GM12878 (cell line): ENCODE measurements at regions of chr10 and their contacts with region 1.

Region 1: DNA sequence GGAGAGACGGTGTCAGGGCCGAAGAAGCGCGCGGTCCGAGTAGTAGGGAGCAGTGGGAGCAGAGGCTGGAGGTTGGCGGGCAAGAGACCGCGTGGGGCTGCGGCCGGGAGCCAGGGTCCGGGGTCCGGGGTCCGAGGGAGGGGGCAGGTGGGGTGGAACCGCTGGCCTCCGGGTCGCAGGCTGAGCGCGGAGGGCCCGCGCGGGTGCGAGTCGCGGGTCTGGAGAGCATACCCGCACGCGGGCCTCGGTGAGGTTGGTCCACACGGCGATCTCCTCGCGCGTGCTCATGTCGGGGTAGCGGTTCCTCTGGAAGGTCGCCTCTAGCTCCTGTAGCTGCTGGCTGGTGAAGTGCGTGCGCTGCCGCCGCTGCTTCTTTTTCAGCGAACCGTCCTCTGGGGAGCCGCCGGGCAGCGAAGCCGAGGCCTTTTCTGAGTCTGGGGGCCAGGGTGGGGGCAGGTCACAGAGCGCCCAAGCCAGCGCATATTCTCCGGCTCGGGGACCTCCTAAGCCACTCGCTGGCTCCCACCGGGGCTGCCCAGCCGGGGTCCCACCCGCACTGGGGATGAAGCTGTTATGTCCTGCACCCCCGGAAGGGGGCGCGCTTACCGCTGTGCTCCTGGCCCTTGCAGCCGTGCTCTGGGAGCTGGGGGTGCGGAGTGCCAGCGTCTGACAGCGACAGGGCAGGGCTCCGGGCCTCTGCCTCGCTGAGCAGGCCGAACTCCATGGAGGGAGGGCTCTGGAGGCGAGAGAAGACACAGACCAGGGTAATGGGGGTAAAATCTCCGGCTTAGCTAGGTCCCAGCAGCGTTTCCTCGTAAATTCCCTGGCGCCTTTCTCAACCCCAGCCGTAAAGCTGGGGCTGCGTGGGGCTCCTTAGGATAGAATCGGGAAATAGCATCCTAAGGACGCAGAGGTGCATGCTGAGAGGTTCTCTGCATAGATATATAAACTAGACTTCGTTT is 5.5 kb downstream of the ELOVL3 start:
- DNase-seq: no peak
- ATAC-seq: peak; percentile 77
- H3K4me3 ChIP-seq: peak overlapping the region; percentile 64
- H3K27ac ChIP-seq: no peak overlapping the region
- H3K4me1 ChIP-seq: peaks cover 10% of the 10 kb centered on the region
- H3K27me3 ChIP-seq: peaks cover 5 to 11% of the 10 kb centered on the region in 2 experiments; a peak in 3 of 4 replicates
- CTCF ChIP-seq: peak; percentile 76 to 90 (median 80)
- EP300 ChIP-seq: no peak
- POLR2A ChIP-seq: no peak
- RAD21 ChIP-seq: peak; percentile 55; the same call in 1 of the 2 replicates

Region 2: GRCh38 chr10:102096449-102096848 is 135.2 kb before region 1 on chr10:
- CTCF ChIA-PET with region 1: no interaction called
- POLR2A ChIA-PET with region 1: no interaction called
- RAD21 ChIA-PET with region 1: no interaction called
- SMC1A ChIA-PET with region 1: no interaction called
- in situ Hi-C with region 1: no loop called
- intact Hi-C with region 1: no loop called
- DNase-seq: no peak
- ATAC-seq: no peak
- H3K4me3 ChIP-seq: no peak overlapping the region
- H3K27ac ChIP-seq: no peak overlapping the region
- H3K4me1 ChIP-seq: no peaks in the 10 kb centered on the region
- H3K27me3 ChIP-seq: no peaks in the 10 kb centered on the region
- CTCF ChIP-seq: no peak
- EP300 ChIP-seq: no peak
- POLR2A ChIP-seq: no peak
- RAD21 ChIP-seq: no peak

Region 3: GRCh38 chr10:102245101-102245931 is 13.7 kb after region 1 on chr10 and contains the start of gene GBF1:
- CTCF ChIA-PET with region 1: interaction called, 49 read pairs
- POLR2A ChIA-PET with region 1: interaction called, 3 read pairs
- RAD21 ChIA-PET with region 1: interaction called, 16 read pairs
- SMC1A ChIA-PET with region 1: interaction called, 6 read pairs
- in situ Hi-C with region 1: no loop called
- intact Hi-C with region 1: no loop called
- DNase-seq: peak; percentile 100
- ATAC-seq: peak; percentile 94
- H3K4me3 ChIP-seq: peak within 1 kb of the TSS; percentile 86
- H3K27ac ChIP-seq: peak within 1 kb of the TSS; percentile 88
- H3K4me1 ChIP-seq: peaks cover 4% of the 10 kb centered on the region; the same call in 1 of the 2 replicates
- H3K27me3 ChIP-seq: peaks cover 3 to 9% of the 10 kb centered on the region in 2 experiments
- CTCF ChIP-seq: no peak
- EP300 ChIP-seq: 0 out of 4 replicates have a peak, but pooled peaks of 1 of the 2 experiments have one; percentile 13
- POLR2A ChIP-seq: peak; percentile 99
- RAD21 ChIP-seq: no peak
- polyA plus RNA-seq, gene GBF1: 0.82 to 1.2 TPM

Region 4: GRCh38 chr10:102334101-102334500 is 102.5 kb after region 1 on chr10:
- CTCF ChIA-PET with region 1: interaction called, 11 read pairs
- POLR2A ChIA-PET with region 1: no interaction called
- RAD21 ChIA-PET with region 1: no interaction called
- SMC1A ChIA-PET with region 1: interaction called, 4 read pairs
- in situ Hi-C with region 1: no loop called
- intact Hi-C with region 1: no loop called
- DNase-seq: no peak
- ATAC-seq: no peak
- H3K4me3 ChIP-seq: no peak overlapping the region
- H3K27ac ChIP-seq: no peak overlapping the region
- H3K4me1 ChIP-seq: no peaks in the 10 kb centered on the region; the same call in 1 of the 2 replicates
- H3K27me3 ChIP-seq: no peaks in the 10 kb centered on the region
- CTCF ChIP-seq: no peak
- EP300 ChIP-seq: no peak
- POLR2A ChIP-seq: no peak
- RAD21 ChIP-seq: no peak

Region 5: GRCh38 chr10:102384053-102384452 is 152.4 kb after region 1 on chr10:
- CTCF ChIA-PET with region 1: interaction called, 13 read pairs
- POLR2A ChIA-PET with region 1: no interaction called
- RAD21 ChIA-PET with region 1: interaction called, 14 read pairs
- SMC1A ChIA-PET with region 1: interaction called, 5 read pairs
- in situ Hi-C with region 1: no loop called
- intact Hi-C with region 1: no loop called
- DNase-seq: no peak
- ATAC-seq: peak; percentile 59
- H3K4me3 ChIP-seq: no peak overlapping the region
- H3K27ac ChIP-seq: no peak overlapping the region
- H3K4me1 ChIP-seq: peaks cover 13% of the 10 kb centered on the region
- H3K27me3 ChIP-seq: no peaks in the 10 kb centered on the region
- CTCF ChIP-seq: peak in 1 of 3 experiments; percentile 26; a peak in 3 of 6 replicates
- EP300 ChIP-seq: no peak
- POLR2A ChIP-seq: no peak
- RAD21 ChIP-seq: no peak

Region 6: GRCh38 chr10:102534333-102534732 is 302.7 kb after region 1 on chr10:
- CTCF ChIA-PET with region 1: no interaction called
- POLR2A ChIA-PET with region 1: no interaction called
- RAD21 ChIA-PET with region 1: no interaction called
- SMC1A ChIA-PET with region 1: no interaction called
- in situ Hi-C with region 1: no loop called
- intact Hi-C with region 1: no loop called
- DNase-seq: no peak
- ATAC-seq: no peak
- H3K4me3 ChIP-seq: no peak overlapping the region
- H3K27ac ChIP-seq: no peak overlapping the region
- H3K4me1 ChIP-seq: peaks cover 20% of the 10 kb centered on the region
- H3K27me3 ChIP-seq: no peaks in the 10 kb centered on the region
- CTCF ChIP-seq: no peak
- EP300 ChIP-seq: no peak
- POLR2A ChIP-seq: no peak
- RAD21 ChIP-seq: no peak